GM12878 (cell line): ENCODE measurements at regions of chr22 and their contacts with region 1.

Region 1: GRCh38 chr22:25362215-25362882 is 142.9 kb downstream of the CRYBB2 start:
- DNase-seq: no peak
- ATAC-seq: peak; percentile 95
- H3K4me3 ChIP-seq: no peak overlapping the region
- H3K27ac ChIP-seq: no peak overlapping the region
- H3K4me1 ChIP-seq: peaks cover 5% of the 10 kb centered on the region; the same call in 1 of the 2 replicates
- H3K27me3 ChIP-seq: no peaks in the 10 kb centered on the region
- CTCF ChIP-seq: peak; percentile 80 to 88 (median 86); a peak in 5 of 6 replicates
- EP300 ChIP-seq: no peak
- POLR2A ChIP-seq: no peak
- RAD21 ChIP-seq: peak; percentile 93

Region 2: GRCh38 chr22:25399649-25400151 is 37.4 kb after region 1 on chr22:
- CTCF ChIA-PET with region 1: interaction called, 4 read pairs
- POLR2A ChIA-PET with region 1: no interaction called
- RAD21 ChIA-PET with region 1: interaction called, 3 read pairs
- SMC1A ChIA-PET with region 1: interaction called, 3 read pairs
- in situ Hi-C with region 1: no loop called
- intact Hi-C with region 1: loop called (anchors 2 kb)
- DNase-seq: no peak
- ATAC-seq: no peak
- H3K4me3 ChIP-seq: no peak overlapping the region
- H3K27ac ChIP-seq: no peak overlapping the region
- H3K4me1 ChIP-seq: peaks cover 49% of the 10 kb centered on the region
- H3K27me3 ChIP-seq: no peaks in the 10 kb centered on the region
- CTCF ChIP-seq: no peak
- EP300 ChIP-seq: no peak
- POLR2A ChIP-seq: no peak
- RAD21 ChIP-seq: no peak

Region 3: GRCh38 chr22:25772288-25772687 is 409.9 kb after region 1 on chr22:
- CTCF ChIA-PET with region 1: no interaction called
- POLR2A ChIA-PET with region 1: no interaction called
- RAD21 ChIA-PET with region 1: interaction called, 3 read pairs
- SMC1A ChIA-PET with region 1: no interaction called
- in situ Hi-C with region 1: no loop called
- intact Hi-C with region 1: loop called (anchors 2 kb)
- DNase-seq: no peak
- ATAC-seq: no peak; the same call in 2 of the 3 replicates
- H3K4me3 ChIP-seq: no peak overlapping the region
- H3K27ac ChIP-seq: no peak overlapping the region
- H3K4me1 ChIP-seq: 0 out of 2 replicates have a peak, but pooled peaks cover 3% of the 10 kb centered on the region
- H3K27me3 ChIP-seq: no peaks in the 10 kb centered on the region
- CTCF ChIP-seq: no peak
- EP300 ChIP-seq: no peak
- POLR2A ChIP-seq: no peak
- RAD21 ChIP-seq: no peak